Panc1 (cell line): ENCODE measurements at regions of chr13 and their contacts with region 1.

Region 1: DNA sequence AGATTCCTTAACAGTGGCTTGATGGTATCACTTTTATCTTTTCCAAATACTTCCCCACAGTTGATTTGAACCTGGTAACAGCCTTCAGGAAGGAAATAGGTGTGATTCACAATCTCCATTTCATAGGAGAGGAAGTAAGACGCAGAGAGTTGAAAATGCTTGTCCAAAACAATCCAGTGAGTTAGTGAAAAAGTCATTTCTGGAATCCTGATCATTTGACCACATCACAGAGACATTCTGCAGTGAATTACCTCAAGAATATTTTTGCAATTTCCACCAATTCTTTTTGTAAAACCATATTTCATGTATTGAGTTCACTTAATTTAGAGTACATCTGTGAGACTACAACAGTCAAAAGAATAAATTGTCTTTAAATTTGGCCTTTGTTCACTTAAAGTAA is 292.8 kb downstream of the DCLK1 start:
- DNase-seq: no peak
- ATAC-seq: no peak
- H3K4me3 ChIP-seq: no peak overlapping the region
- H3K27ac ChIP-seq: no peak overlapping the region
- H3K4me1 ChIP-seq: no peaks in the 10 kb centered on the region
- H3K27me3 ChIP-seq: no peaks in the 10 kb centered on the region
- CTCF ChIP-seq: no peak

Region 2: DNA sequence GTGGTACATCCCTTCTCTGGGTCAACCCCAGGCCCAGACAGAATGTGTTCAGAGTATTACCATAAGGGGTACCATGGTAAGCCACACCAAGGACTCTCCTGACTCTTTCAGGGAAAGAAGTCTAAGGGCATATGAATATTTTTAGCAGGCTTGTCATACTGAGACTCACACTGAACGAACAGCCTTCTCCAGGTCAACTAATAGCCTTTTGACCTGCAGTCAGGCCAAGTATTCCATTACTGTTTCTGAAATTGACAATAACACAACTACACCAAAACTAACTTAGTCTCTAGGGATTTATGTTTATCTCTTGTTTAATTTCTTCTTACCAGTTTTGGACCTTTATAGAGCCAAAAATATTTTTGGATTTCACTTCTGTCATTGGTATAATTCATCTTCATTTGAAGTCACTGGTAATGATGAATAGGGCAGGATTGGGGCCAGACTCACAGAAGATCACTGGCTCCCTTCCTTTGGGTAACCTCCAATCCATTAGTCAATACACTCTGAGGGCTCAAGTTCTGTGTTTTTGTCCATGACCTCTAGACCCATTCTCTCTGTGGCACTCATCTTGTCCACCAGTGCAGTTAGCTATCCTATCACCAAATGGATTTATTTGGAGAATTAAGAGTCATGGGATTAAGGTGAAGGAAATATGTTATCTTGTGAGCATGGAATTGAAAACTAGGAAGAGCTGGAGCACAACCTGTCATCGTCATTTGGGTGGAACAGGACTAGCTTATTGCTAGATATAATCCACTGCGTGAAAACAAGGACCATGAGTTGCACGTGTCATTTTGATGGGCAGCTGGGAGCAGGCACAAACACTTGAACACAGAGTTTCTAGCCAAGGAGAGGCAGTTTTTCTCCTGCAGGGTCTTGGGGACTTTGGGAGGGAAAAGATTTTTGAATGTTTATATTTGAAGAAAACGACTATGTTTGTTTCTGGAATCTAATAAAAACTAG is 20.4 kb before region 1 on chr13:
- CTCF ChIA-PET with region 1: no interaction called
- POLR2A ChIA-PET with region 1: interaction called, 15 read pairs
- in situ Hi-C with region 1: no loop called
- intact Hi-C with region 1: no loop called
- DNase-seq: no peak
- ATAC-seq: no peak
- H3K4me3 ChIP-seq: no peak overlapping the region
- H3K27ac ChIP-seq: no peak overlapping the region
- H3K4me1 ChIP-seq: no peaks in the 10 kb centered on the region
- H3K27me3 ChIP-seq: no peaks in the 10 kb centered on the region
- CTCF ChIP-seq: no peak

Region 3: DNA sequence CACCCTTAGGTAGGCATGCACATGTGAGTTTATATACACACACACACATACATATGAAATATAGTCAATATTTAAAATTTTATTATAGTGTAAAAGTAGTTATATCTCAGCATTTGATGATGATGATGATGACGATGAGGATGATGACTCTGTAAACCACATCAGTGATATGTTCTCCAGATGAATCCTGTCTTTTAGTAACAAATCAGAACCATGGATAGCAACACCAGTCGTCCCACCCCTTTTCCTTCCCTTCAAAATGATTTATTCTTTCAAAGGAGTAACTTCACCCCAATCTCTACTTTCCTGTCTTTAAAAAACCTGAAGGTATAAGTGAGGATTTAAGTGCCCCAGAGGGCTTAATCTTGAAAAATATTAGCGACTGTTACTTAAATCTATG is 218.7 kb after region 1 on chr13:
- CTCF ChIA-PET with region 1: no interaction called
- POLR2A ChIA-PET with region 1: no interaction called
- in situ Hi-C with region 1: no loop called
- intact Hi-C with region 1: no loop called
- DNase-seq: no peak
- ATAC-seq: no peak
- H3K4me3 ChIP-seq: no peak overlapping the region
- H3K27ac ChIP-seq: no peak overlapping the region
- H3K4me1 ChIP-seq: no peaks in the 10 kb centered on the region
- H3K27me3 ChIP-seq: no peaks in the 10 kb centered on the region
- CTCF ChIP-seq: no peak